Psoas muscle (tissue), 8 donors: ENCODE measurements at regions of chrX and their contacts with region 1.

Region 1: GRCh38 chrX:10098270-10098713 is 58.5 kb upstream of the CLCN4 start:
- DNase-seq: no peak
- ATAC-seq: no peak
- H3K4me3 ChIP-seq: peak overlapping the region; percentile 27
- H3K27ac ChIP-seq: no peak overlapping the region
- H3K4me1 ChIP-seq: no peaks in the 10 kb centered on the region
- H3K27me3 ChIP-seq: no peaks in the 10 kb centered on the region
- CTCF ChIP-seq: no peak

Region 2: DNA sequence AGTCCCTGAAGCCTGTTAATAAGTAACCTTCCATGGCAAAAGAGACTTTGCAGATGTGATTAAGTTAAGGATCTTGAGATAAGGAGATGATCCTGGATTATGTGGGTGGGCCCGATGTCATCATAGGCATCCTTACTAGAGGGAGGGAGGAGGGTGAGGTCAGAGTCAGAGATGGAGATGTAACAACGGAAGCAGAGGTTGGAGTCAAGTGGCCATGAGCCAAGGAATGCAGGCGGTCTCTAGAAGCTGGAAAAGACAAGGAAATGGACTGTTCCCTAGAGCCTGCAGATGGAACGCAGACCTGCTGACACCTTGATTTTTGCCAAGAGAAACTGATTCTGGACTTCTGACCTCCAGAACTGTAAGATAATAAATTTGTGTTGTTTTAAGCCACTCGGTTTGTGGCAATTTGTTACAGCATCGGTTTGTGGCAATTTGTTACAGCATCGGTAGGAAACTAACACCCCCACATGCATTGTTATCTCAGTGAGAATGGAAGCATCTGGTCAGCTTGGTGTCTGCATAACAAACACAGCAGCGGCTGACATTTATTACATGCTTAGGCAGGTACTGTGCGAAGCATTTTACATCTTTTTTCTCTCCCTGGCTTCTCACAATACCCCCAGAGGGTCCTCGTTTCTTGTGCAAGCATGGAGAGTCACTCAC is 75.6 kb before region 1 on chrX:
- intact Hi-C with region 1: loop called in 1 of 2 experiments (anchors 5 kb)
- DNase-seq: peak in 1 of 2 donors; percentile 48
- ATAC-seq: peak in 2 of 4 donors; percentile 42 to 59
- H3K4me3 ChIP-seq: no peak overlapping the region
- H3K27ac ChIP-seq: no peak overlapping the region
- H3K4me1 ChIP-seq: peaks cover 8% of the 10 kb centered on the region
- H3K27me3 ChIP-seq: no peaks in the 10 kb centered on the region
- CTCF ChIP-seq: no peak